HEK293 (cell line): ENCODE measurements at regions of chr19 and their contacts with region 1.

Region 1: DNA sequence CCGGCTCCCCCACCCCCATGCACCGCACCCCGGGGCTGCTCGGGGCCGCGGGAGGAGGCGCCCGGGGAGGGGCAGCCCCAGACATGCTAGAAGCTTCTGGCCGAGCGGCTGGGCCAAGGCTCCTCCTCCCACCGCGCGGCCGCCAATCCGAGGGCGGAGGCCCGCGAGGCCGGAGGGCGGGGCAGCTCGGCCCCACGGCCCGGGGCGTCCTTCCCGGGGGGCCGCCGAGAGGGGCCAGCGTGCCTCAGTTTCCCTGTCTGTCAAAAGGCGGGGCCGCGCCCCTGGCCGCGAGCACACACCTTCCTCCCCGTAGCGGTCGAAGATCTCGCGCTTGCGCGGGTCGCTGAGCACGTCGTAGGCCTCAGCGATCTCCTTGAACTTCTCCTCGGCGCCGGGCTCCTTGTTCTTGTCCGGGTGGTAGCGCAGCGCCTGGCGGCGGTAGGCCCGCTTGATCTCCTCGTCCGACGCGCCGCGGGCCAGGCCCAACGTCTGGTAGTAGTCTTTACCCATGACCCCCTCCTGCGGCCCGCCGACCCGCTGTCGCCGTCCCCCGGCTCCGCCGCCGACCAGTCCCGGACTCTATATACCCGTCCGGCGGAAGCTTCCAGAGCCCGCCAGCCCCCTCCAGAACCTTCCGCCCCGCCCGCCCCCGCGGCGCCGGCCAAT is at the start of gene DNAJB1:
- H3K4me3 ChIP-seq: peak within 1 kb of the TSS; percentile 97
- H3K27ac ChIP-seq: peak within 1 kb of the TSS; percentile 96
- H3K4me1 ChIP-seq: no peaks in the 10 kb centered on the region; the same call in 1 of the 2 replicates
- CTCF ChIP-seq: no peak; the same call in 1 of the 2 replicates

Region 2: GRCh38 chr19:14496028-14496833 is 21.7 kb before region 1 on chr19 and contains the start of gene GIPC1:
- CTCF ChIA-PET with region 1: no interaction called
- POLR2A ChIA-PET with region 1: interaction called, 45 read pairs
- H3K4me3 ChIP-seq: peak within 1 kb of the TSS; percentile 69
- H3K27ac ChIP-seq: peak within 1 kb of the TSS; percentile 60; the same call in 1 of the 2 replicates
- H3K4me1 ChIP-seq: no peaks in the 10 kb centered on the region
- CTCF ChIP-seq: no peak

Region 3: GRCh38 chr19:14505488-14506432 is 12.2 kb before region 1 on chr19:
- CTCF ChIA-PET with region 1: interaction called, 5 read pairs
- POLR2A ChIA-PET with region 1: interaction called, 48 read pairs
- H3K4me3 ChIP-seq: no peak overlapping the region
- H3K27ac ChIP-seq: peak overlapping the region; percentile 53
- H3K4me1 ChIP-seq: no peaks in the 10 kb centered on the region; the same call in 1 of the 2 replicates
- CTCF ChIP-seq: peak; percentile 75

Region 4: DNA sequence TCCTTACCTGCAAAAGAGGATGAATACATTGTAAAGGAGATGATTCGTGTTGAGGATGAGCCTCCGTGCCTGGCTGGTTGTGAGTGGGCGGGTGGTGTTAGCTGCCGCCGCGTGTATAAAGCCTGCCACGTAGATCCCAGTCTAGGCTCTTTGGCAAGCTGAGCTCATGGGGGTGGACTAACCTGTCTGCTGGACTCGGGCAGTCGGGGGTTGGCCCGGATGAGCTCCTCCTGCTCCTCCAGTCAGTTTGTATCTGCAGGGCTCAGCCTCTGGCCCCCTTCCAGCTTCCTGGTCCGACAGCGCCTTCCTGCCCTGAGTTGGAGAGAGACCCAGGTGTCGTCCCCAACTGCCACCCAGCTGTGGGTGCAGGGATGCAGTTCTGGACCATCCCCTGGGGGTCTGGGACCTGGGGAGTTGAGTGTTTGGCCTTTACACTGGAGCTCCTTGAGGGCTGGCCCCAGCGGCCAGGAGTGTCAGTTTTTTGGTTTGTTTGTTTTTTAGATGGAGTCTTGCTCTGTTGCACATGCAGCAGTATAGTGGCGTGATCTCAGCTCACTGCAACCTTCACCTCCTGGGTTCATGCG is 32.3 kb after region 1 on chr19:
- CTCF ChIA-PET with region 1: no interaction called
- POLR2A ChIA-PET with region 1: interaction called, 14 read pairs
- H3K4me3 ChIP-seq: no peak overlapping the region
- H3K27ac ChIP-seq: 0 out of 2 replicates have a peak overlapping the region, but pooled peaks have one; percentile 17
- H3K4me1 ChIP-seq: peaks cover 8% of the 10 kb centered on the region; the same call in 1 of the 2 replicates
- CTCF ChIP-seq: no peak

Region 5: GRCh38 chr19:14571695-14572490 is 53.9 kb after region 1 on chr19 and contains the start of gene NDUFB7:
- CTCF ChIA-PET with region 1: no interaction called
- POLR2A ChIA-PET with region 1: interaction called, 13 read pairs
- H3K4me3 ChIP-seq: peak within 1 kb of the TSS; percentile 72
- H3K27ac ChIP-seq: peak within 1 kb of the TSS; percentile 57; the same call in 1 of the 2 replicates
- H3K4me1 ChIP-seq: peaks cover 4% of the 10 kb centered on the region; the same call in 1 of the 2 replicates
- CTCF ChIP-seq: peak; percentile 97

Region 6: DNA sequence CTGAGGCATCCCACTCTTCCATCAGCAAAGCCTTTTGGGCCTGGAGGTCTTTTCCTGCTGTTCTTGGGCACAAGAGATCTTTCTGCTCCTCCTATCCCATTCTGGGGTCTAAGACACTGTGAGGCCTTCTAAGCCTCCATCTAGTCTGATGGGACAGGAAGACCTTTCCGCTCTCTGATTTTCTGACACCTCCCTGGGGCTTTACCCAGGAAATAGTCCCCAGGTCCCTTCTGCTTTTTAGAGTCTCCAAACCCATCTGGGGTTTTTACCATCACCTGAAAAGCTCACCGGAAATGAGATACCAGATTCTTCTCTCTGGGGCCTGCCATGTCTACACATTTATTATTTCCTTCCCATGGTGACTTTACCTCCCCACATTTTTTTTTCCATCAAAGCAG is 86.0 kb after region 1 on chr19:
- CTCF ChIA-PET with region 1: no interaction called
- POLR2A ChIA-PET with region 1: no interaction called
- H3K4me3 ChIP-seq: no peak overlapping the region
- H3K27ac ChIP-seq: no peak overlapping the region
- H3K4me1 ChIP-seq: no peaks in the 10 kb centered on the region
- CTCF ChIP-seq: no peak

Region 7: DNA sequence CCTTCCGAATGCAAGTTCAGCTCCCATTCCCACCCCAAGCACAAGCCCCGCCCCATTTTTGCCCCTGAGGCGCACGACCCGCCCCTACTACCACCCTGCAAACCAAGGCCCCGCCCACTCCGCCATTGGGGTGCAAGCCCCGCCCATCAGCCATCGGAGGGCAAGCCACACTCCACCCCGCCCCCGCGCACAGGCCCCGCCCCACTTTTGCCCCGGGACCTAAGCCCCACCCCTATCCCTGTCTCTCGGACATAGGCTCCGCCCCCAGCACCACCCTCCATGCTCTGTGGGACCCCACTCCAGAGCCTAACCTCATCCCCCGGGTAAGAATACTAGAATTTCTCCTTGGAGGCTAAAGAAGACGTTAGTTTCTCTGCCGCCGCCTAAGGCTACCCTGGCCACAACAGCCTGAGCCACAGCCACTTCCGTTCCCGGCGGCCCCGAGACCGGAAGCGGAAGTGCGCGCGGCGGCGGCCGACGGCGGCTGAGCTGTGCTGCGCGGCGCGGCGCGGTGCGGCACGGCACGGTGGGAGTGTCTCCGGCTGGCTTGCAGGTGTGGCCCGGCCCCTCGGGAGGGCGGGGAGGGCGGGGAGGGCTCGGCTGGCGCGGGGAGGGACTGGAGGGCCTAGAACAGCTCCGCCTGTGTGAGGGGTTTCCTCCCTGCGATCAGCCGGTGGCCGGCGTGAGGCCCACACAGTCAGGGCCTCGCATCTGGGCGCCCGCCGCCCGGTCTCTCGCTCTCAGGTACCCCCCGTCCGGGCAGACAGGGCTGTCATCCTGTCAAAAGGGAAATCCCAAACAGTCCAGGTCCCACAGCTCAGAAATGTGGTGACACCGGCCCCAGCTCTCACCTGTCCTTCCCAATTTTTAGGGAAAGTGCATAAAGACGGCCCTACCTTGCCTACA is 171.9 kb after region 1 on chr19 and contains the start of gene ZNF333:
- CTCF ChIA-PET with region 1: no interaction called
- POLR2A ChIA-PET with region 1: interaction called, 10 read pairs
- H3K4me3 ChIP-seq: peak within 1 kb of the TSS; percentile 74
- H3K27ac ChIP-seq: peak within 1 kb of the TSS; percentile 82
- H3K4me1 ChIP-seq: no peaks in the 10 kb centered on the region; the same call in 1 of the 2 replicates
- CTCF ChIP-seq: no peak